Activated T-helper 2 cell treated with anti-CD3 and anti-CD28 coated beads, Interferon-gamma antibody, Interleukin-2, Interleukin-4, amounts not matched to agents 10 μg/mL and 5 μg/mL and 100 μg/mL, durations not matched to agents 14 hours and 24 hours and 36 hours (primary cell): ENCODE measurements at regions of chr3 and their contacts with region 1.

Region 1: GRCh38 chr3:15629860-15630597 is 28.5 kb downstream of the BTD start:
- DNase-seq: peak; percentile 63
- H3K4me3 Mint-ChIP-seq: peak overlapping the region; percentile 6
- H3K27ac Mint-ChIP-seq: peak overlapping the region; percentile 64
- H3K4me1 Mint-ChIP-seq: peaks cover 52% of the 10 kb centered on the region
- H3K27me3 Mint-ChIP-seq: no peaks in the 10 kb centered on the region

Region 2: DNA sequence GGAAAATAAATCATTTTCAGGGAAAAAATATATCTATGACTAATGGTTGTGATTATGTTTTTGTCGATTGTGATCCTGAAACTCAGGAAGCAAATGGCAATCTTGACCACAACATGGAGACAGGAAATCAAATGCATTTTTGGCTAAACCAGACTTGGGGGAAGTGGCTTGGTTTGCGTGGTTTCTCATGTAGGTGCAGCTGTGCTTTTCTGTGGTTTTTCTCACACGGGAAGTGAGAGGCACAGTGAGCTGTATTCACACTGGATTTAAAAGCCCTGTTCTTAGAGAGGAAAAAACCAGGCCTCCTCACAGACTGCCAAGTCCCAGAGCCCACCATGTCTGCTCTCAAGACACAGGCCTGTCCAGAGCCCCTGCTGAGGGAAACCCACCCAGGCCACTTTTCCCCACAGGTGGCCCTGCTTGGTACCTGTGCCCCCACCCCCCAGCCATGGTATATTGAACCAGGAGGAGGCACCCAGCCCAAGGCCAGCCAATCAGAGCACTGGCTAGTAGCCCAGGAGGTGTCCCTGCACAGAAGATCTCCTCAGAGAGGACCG is 17.7 kb after region 1 on chr3:
- intact Hi-C with region 1: loop called (anchors 1 kb)
- DNase-seq: peak; percentile 62
- H3K4me3 Mint-ChIP-seq: peak overlapping the region; percentile 52
- H3K27ac Mint-ChIP-seq: peak overlapping the region; percentile 73
- H3K4me1 Mint-ChIP-seq: peaks cover 44% of the 10 kb centered on the region
- H3K27me3 Mint-ChIP-seq: no peaks in the 10 kb centered on the region

Region 3: GRCh38 chr3:15726043-15726442 is 96.0 kb after region 1 on chr3:
- intact Hi-C with region 1: loop called (anchors 5 kb)
- DNase-seq: no peak
- H3K4me3 Mint-ChIP-seq: no peak overlapping the region
- H3K27ac Mint-ChIP-seq: peak overlapping the region; percentile 15
- H3K4me1 Mint-ChIP-seq: peaks cover 50% of the 10 kb centered on the region
- H3K27me3 Mint-ChIP-seq: no peaks in the 10 kb centered on the region

Region 4: DNA sequence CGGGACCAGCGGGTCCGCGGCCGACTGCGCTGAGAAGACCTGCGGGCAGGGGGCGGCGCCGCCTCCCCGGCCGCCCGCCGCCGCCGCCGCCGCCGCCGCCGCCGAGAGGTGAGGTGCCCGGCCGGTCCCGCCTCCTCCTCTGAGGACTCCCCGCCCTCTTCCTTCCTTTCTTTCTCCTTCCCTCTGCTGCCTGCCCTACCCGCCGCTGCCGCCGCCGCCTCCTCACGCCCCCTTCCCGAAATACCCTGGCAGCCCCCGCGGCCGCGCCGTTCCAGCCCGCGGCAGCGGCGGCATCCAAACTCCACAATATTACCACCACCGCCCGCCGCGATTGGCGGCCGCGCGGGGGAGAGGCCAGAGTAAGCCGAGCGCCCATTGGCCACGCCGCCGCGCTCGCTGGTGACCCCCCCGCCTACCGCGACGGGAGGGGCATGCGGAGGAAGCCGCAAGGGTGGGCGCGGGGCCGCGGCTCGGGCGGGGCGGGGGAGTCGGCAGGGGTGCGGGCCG is 229.5 kb after region 1 on chr3:
- intact Hi-C with region 1: loop called (anchors 1 kb)
- DNase-seq: peak; percentile 73
- H3K4me3 Mint-ChIP-seq: peak overlapping the region; percentile 94
- H3K27ac Mint-ChIP-seq: peak overlapping the region; percentile 96
- H3K4me1 Mint-ChIP-seq: peaks cover 36% of the 10 kb centered on the region
- H3K27me3 Mint-ChIP-seq: no peaks in the 10 kb centered on the region

Region 5: DNA sequence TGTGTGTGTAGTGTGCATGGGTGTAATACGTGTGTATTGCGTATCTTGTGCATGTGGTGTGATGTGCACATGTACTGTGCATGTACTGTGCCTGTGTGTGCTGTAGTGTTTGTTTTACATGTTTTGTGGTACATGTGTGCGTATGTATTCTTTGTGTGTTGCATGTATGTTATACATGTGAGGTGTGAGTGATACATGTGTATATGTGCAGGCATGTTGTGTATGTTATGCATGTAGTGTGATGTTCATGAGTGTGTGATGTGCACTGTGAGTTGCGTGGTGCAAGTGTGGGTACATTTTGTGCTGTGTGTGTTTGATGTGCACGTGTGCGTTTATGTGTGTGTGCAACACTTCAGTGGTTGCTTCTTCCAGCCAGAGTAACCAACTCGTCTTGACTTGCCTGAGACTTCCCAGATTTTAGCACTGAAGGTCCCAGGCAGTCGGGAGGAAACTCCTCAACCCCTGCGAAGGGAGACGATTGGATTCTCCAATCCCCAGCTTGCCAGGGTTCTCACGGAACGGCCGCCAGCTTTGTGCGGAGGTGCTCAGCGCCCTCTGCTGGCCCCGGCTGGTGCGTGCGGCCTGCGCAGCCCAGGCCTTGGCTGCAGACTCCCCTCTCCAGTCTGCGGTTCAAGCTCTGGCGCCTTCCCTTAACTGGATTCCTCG is 548.1 kb after region 1 on chr3:
- intact Hi-C with region 1: loop called (anchors 2 kb)
- DNase-seq: peak; percentile 45
- H3K4me3 Mint-ChIP-seq: no peak overlapping the region
- H3K27ac Mint-ChIP-seq: no peak overlapping the region
- H3K4me1 Mint-ChIP-seq: peaks cover 3% of the 10 kb centered on the region
- H3K27me3 Mint-ChIP-seq: peaks cover 22% of the 10 kb centered on the region